ENCODE measurements at regions of chr19 and their contacts with region 1.

Region 1: GRCh38 chr19:47243776-47244547 is 12.4 kb upstream of the CCDC9 start:
- DNase-seq: peak; percentile 95
- ATAC-seq: peak; percentile 71
- H3K4me3 Mint-ChIP-seq: peak overlapping the region; percentile 81
- H3K27ac Mint-ChIP-seq: peak overlapping the region; percentile 98
- H3K4me1 Mint-ChIP-seq: peaks cover 26% of the 10 kb centered on the region
- H3K27me3 Mint-ChIP-seq: no peaks in the 10 kb centered on the region
- CTCF ChIP-seq: peak; percentile 99

Region 2: DNA sequence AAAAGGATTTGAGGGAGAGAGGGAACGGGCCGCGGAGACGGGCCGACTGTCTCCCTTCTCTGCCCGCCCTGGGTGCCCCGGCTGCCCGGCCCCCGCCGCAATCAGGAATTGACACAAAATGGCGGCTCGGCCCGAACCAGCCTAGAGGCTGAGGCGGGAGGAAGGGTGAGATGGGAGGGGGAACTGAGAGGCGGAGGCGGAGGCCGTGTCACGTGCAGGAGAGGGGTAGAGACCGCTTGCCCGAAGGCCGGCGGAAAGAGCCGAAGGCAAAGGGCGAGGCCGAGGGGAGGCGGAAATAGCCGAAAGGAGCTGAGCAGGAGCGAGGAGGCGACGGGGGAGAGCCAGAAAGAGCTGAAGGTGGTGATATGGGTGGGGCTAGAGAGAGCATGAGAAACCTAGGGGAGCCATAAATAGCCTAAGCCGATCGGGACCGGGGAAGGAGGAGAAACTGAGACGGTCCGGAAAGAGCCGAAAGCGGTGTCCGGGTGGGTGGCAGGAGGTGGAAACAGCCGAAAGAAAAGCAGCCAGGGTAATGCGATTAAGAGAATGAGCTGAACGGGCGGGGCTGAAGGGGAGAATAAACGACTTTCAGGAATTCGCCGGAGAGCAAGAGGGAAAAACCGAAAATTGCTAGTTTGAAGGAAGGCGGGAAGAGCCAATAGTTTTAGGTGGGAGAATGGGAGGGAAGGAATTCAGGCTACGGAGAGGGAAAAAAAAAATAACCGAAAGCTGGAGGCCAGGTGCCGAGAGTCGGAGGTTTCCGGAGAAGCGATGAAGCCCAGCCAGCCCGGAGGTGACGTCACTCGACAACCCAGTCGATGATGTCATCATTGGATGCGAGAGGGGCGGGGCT is 130.7 kb before region 1 on chr19 and contains the start of gene ZC3H4:
- CTCF ChIA-PET with region 1: interaction called, 16 read pairs
- POLR2A ChIA-PET with region 1: interaction called, 8 read pairs
- intact Hi-C with region 1: no loop called
- DNase-seq: peak; percentile 99
- ATAC-seq: peak; percentile 88
- H3K4me3 Mint-ChIP-seq: peak within 1 kb of the TSS; percentile 89
- H3K27ac Mint-ChIP-seq: peak within 1 kb of the TSS; percentile 99
- H3K4me1 Mint-ChIP-seq: peaks cover 24% of the 10 kb centered on the region
- H3K27me3 Mint-ChIP-seq: no peaks in the 10 kb centered on the region
- CTCF ChIP-seq: no peak
- total RNA-seq, gene ZC3H4: 68.5 to 70.2 TPM

Region 3: GRCh38 chr19:47143322-47144073 is 100.5 kb before region 1 on chr19:
- CTCF ChIA-PET with region 1: interaction called, 119 read pairs
- POLR2A ChIA-PET with region 1: no interaction called
- intact Hi-C with region 1: no loop called
- DNase-seq: no peak
- ATAC-seq: peak; percentile 29
- H3K4me3 Mint-ChIP-seq: no peak overlapping the region
- H3K27ac Mint-ChIP-seq: no peak overlapping the region
- H3K4me1 Mint-ChIP-seq: peaks cover 53% of the 10 kb centered on the region
- H3K27me3 Mint-ChIP-seq: no peaks in the 10 kb centered on the region
- CTCF ChIP-seq: no peak

Region 4: GRCh38 chr19:47190167-47190727 is 53.7 kb before region 1 on chr19:
- CTCF ChIA-PET with region 1: interaction called, 43 read pairs
- POLR2A ChIA-PET with region 1: interaction called, 5 read pairs
- intact Hi-C with region 1: no loop called
- DNase-seq: peak; percentile 88
- ATAC-seq: peak; percentile 40
- H3K4me3 Mint-ChIP-seq: peak overlapping the region; percentile 45
- H3K27ac Mint-ChIP-seq: peak overlapping the region; percentile 84
- H3K4me1 Mint-ChIP-seq: peaks cover 62% of the 10 kb centered on the region
- H3K27me3 Mint-ChIP-seq: no peaks in the 10 kb centered on the region
- CTCF ChIP-seq: no peak

Region 5: DNA sequence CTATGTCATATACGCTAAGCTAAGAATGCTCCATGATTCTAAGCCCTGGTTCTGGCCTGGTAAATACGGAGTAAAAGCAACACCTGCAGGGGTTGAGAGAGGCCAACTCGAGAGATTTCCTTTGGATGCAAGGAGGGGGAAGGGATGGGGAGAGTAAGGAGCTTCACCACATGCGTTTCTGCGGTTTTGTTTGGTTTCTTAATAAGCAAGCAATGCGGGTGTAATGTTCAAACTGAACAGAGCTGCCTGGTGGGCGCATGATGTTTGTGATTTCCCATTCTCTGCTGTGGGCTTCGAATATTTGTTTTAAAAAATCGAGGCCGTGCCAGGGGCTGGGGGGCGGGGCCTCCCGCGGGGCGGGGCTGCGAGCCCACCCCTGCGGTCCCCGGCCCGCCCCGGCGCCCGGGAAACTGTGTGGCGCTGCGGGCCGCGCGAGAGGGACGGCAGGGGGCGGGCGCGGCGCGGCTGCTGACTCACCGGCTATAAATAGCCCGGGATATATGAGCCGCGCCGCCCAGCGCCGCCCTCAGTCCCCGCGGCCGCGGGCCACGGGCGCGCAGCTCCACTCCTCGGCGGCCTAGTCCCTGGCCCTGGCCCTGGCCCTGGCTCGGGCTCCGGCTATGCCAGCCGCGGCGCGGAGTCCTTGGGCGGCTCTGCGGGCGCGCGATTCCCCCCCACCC is 18.1 kb before region 1 on chr19:
- CTCF ChIA-PET with region 1: interaction called, 68 read pairs
- POLR2A ChIA-PET with region 1: interaction called, 38 read pairs
- intact Hi-C with region 1: loop called (anchors 2 kb)
- DNase-seq: peak; percentile 86
- ATAC-seq: peak; percentile 63
- H3K4me3 Mint-ChIP-seq: peak overlapping the region; percentile 82
- H3K27ac Mint-ChIP-seq: peak overlapping the region; percentile 72
- H3K4me1 Mint-ChIP-seq: peaks cover 8% of the 10 kb centered on the region
- H3K27me3 Mint-ChIP-seq: no peaks in the 10 kb centered on the region
- CTCF ChIP-seq: peak; percentile 49

Region 6: DNA sequence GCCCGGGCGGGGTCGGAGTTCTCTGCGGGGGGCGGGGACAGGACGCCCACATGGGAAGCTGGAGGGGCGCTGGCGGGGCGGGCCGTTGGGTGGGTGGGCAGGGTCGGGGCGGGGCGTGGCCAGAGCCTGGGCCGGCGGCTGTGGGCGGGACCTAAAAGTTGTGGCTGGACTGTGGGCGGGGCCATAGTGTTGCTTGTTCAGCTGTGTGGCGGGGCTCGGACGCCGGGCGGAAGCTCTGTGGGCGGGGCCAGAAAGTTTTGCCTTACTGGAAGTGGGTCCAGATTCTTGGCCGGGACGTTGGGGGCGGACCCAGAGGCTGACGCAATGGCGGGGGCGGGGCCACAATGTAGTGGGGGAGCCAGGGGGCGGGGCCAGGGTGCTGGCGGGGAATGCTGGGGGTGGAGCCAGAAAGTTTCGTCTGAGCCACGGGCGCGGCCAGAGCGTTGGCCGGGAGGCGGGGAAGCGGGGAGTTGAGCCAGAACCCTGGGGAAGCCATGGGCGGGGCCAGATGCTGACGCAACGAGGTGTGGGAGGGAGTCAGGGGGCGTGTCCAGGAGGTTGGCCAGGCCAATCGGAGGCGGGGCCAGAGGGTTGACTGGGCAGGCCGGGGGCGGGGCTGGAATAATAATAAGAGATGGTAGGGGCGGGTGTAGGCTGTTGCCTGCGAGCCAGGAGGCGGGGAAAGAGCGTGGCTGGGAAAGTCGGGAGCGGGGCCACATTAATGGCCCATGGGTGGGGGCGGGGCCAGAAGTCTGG is 12.9 kb after region 1 on chr19:
- CTCF ChIA-PET with region 1: interaction called, 54 read pairs
- POLR2A ChIA-PET with region 1: interaction called, 45 read pairs
- intact Hi-C with region 1: no loop called
- DNase-seq: peak; percentile 100
- ATAC-seq: peak; percentile 83
- H3K4me3 Mint-ChIP-seq: peak overlapping the region; percentile 84
- H3K27ac Mint-ChIP-seq: peak overlapping the region; percentile 98
- H3K4me1 Mint-ChIP-seq: peaks cover 36% of the 10 kb centered on the region
- H3K27me3 Mint-ChIP-seq: no peaks in the 10 kb centered on the region
- CTCF ChIP-seq: no peak